CD8-positive, alpha-beta memory T cell (primary cell): ENCODE measurements at regions of chr12 and their contacts with region 1.

Region 1: GRCh38 chr12:49336645-49337584 is at the start of gene C1QL4:
- DNase-seq: peak; percentile 80 to 90 (median 85)
- H3K4me3 ChIP-seq: peak within 1 kb of the TSS; percentile 46
- H3K4me3 Mint-ChIP-seq: peak within 1 kb of the TSS; percentile 27 to 89 (median 75)
- H3K27ac ChIP-seq: peak within 1 kb of the TSS; percentile 16
- H3K27ac Mint-ChIP-seq: peak within 1 kb of the TSS in 3 of 8 donors; percentile 51 to 77 (median 64)
- H3K4me1 ChIP-seq: peaks cover 11% of the 10 kb centered on the region
- H3K4me1 Mint-ChIP-seq: peaks cover 19 to 39% (median 20%) of the 10 kb centered on the region in 3 donors
- H3K27me3 ChIP-seq: peaks cover 29% of the 10 kb centered on the region
- H3K27me3 Mint-ChIP-seq: peaks cover 42 to 61% of the 10 kb centered on the region in 2 donors
- total RNA-seq, gene C1QL4: not detected

Region 2: DNA sequence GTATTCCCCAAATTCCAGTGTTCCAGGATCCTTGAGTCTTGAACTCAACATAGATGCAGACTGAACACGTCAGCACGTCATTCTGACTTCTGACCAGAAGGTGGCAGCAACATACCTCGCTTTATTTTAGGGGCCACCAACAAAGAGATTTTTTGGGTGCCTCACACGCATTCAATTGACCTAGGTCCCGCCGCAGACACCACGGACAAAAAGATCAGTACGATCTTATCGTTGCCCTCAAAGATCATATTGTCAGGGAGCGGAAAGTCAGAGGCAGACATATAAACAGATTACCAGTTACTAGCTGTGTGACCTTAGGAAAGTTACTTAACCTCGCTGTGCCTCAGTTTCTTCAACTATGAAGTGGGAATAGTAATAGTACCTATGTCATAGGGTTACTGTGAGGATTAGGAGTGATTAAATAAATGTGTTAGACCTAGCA is 48.5 kb before region 1 on chr12:
- CTCF ChIA-PET with region 1: interaction called, 109 read pairs
- POLR2A ChIA-PET with region 1: interaction called, 3 read pairs
- DNase-seq: peak; percentile 51 to 75 (median 67)
- H3K4me3 ChIP-seq: no peak overlapping the region
- H3K4me3 Mint-ChIP-seq: no peak overlapping the region
- H3K27ac ChIP-seq: no peak overlapping the region
- H3K27ac Mint-ChIP-seq: no peak overlapping the region
- H3K4me1 ChIP-seq: no peaks in the 10 kb centered on the region
- H3K4me1 Mint-ChIP-seq: no peaks in the 10 kb centered on the region
- H3K27me3 ChIP-seq: peaks cover 7% of the 10 kb centered on the region
- H3K27me3 Mint-ChIP-seq: peaks cover 16 to 48% of the 10 kb centered on the region in 2 donors

Region 3: DNA sequence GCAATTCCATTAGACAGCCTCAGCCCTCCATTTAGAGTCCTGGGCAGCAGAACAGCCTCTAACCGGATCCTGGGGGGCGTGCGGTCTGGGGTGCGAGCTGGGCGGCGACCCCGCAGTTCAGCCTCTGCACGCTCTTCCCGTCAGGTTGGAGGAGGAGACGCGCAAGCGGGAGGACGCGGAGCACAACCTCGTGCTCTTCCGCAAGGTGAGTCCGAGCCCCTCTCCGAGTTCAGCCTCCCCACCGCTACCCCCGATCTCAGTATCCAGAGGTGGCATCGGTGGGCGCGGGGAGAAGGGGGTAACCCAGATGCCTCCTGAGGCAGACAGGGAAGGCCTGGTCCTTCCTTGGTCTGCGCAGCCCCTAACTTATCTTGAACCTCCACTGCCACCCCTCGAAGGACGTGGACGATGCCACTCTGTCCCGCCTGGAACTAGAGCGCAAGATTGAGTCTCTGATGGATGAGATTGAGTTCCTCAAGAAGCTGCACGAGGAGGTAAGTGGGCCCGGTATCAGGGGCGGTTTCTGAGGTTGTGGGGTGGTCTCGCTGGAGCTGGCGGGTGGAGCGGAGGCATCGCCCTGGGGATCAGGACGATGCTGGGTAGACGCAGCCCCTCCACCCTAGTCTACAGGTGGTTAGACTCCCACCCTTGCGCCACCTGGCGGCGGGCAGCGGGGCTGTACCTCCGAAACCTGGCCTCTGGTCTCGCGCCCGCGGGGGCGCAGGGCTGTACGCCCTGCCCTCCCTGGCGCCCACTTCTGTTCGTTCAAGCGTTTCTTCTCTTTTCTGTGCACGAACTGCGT is 40.7 kb before region 1 on chr12:
- CTCF ChIA-PET with region 1: interaction called, 109 read pairs
- POLR2A ChIA-PET with region 1: interaction called, 3 read pairs
- DNase-seq: peak; percentile 43 to 70 (median 49)
- H3K4me3 ChIP-seq: peak overlapping the region; percentile 53
- H3K4me3 Mint-ChIP-seq: peak overlapping the region in 5 of 7 donors; percentile 58 to 86 (median 71)
- H3K27ac ChIP-seq: no peak overlapping the region
- H3K27ac Mint-ChIP-seq: no peak overlapping the region
- H3K4me1 ChIP-seq: peaks cover 13% of the 10 kb centered on the region
- H3K4me1 Mint-ChIP-seq: peaks cover 10 to 28% (median 14%) of the 10 kb centered on the region in 3 donors
- H3K27me3 ChIP-seq: peaks cover 39% of the 10 kb centered on the region
- H3K27me3 Mint-ChIP-seq: peaks cover 43 to 61% of the 10 kb centered on the region in 2 donors